Activated T-helper 1 cell treated with anti-CD3 and anti-CD28 coated beads, Interleukin-12 subunit alpha, Interleukin-12 subunit beta, Interleukin-2, Interleukin-4 antibody, amounts not matched to agents 30 ng/mL and 10 ng/mL and 1 ng/mL, durations not matched to agents 14 hours and 24 hours and 36 hours (primary cell): ENCODE measurements at regions of chr9 and their contacts with region 1.

Region 1: DNA sequence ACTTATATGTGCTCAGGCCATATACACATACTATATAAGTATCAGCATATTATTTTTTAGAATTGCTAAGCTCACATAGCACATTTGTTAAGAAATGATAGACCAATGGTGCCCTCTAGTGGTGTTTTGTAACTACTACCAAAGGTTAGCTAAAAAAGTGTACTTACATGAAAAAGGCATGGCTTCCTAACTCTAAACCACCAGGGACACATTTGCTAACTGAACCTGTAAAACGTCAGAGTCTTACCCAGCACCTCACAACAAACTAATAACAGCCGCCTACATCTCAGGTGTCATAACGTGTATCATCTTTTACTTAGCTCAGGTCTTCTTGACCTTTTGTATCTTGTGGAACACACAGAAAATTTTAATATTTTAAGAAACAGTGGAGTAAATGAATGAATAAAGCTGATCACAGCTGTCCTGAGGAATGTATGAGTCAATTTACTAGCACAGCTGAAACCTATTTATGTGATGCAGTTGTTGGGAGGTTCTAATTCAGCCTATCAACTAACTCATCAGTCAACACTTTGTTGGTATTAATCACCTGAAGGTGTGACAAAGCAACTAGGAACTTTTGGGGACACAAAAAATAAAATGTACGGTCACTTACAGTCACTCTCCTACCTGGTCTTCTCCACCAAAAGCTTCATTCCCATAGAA is 72.9 kb downstream of the BAAT start:
- DNase-seq: peak; percentile 2
- H3K4me3 Mint-ChIP-seq: no peak overlapping the region
- H3K27ac Mint-ChIP-seq: no peak overlapping the region
- H3K4me1 Mint-ChIP-seq: no peaks in the 10 kb centered on the region
- H3K27me3 Mint-ChIP-seq: peaks cover 3% of the 10 kb centered on the region

Region 2: DNA sequence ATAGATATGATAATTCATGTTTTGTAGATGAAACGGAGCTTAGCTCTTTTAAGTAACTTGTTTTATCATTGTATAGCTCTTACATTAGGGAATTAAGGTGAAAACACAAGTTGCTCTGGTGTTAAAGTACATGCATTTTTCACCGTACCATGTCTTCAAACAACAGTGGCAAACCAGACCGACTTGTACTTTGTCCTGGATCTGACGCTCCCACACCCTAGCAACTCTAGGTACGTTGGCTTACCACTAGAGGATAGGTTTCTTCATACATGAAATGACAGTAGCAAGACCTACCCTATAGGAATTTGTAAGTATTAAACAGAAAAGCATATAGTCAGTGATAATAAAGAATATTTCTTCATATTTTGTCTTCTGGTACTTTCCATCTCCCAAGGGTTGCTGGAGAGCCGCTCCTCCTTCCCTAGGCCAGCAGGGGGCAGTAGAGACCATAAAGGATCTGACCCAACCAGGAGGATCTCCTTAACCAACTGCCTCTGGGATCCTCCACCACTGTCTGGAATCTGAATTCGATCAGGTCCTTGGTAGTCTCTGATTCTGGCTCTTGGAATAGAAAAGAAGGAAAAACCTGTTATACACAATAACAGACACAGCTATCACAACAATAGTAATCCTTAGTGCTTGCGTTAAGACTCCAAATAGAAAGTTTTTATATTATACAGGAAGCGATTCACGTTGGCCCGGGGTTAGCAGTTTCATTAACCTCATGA is 597.4 kb before region 1 on chr9:
- intact Hi-C with region 1: loop called (anchors 1 kb)
- DNase-seq: peak; percentile 12
- H3K4me3 Mint-ChIP-seq: no peak overlapping the region
- H3K27ac Mint-ChIP-seq: no peak overlapping the region
- H3K4me1 Mint-ChIP-seq: no peaks in the 10 kb centered on the region
- H3K27me3 Mint-ChIP-seq: no peaks in the 10 kb centered on the region

Region 3: GRCh38 chr9:101119206-101119819 is 192.6 kb before region 1 on chr9:
- intact Hi-C with region 1: loop called (anchors 1 kb)
- DNase-seq: no peak
- H3K4me3 Mint-ChIP-seq: no peak overlapping the region
- H3K27ac Mint-ChIP-seq: no peak overlapping the region
- H3K4me1 Mint-ChIP-seq: no peaks in the 10 kb centered on the region
- H3K27me3 Mint-ChIP-seq: peaks cover 3% of the 10 kb centered on the region

Region 4: GRCh38 chr9:101254733-101255473 is 57.0 kb before region 1 on chr9:
- intact Hi-C with region 1: no loop called
- DNase-seq: no peak
- H3K4me3 Mint-ChIP-seq: no peak overlapping the region
- H3K27ac Mint-ChIP-seq: no peak overlapping the region
- H3K4me1 Mint-ChIP-seq: no peaks in the 10 kb centered on the region
- H3K27me3 Mint-ChIP-seq: peaks cover 2% of the 10 kb centered on the region

Region 5: DNA sequence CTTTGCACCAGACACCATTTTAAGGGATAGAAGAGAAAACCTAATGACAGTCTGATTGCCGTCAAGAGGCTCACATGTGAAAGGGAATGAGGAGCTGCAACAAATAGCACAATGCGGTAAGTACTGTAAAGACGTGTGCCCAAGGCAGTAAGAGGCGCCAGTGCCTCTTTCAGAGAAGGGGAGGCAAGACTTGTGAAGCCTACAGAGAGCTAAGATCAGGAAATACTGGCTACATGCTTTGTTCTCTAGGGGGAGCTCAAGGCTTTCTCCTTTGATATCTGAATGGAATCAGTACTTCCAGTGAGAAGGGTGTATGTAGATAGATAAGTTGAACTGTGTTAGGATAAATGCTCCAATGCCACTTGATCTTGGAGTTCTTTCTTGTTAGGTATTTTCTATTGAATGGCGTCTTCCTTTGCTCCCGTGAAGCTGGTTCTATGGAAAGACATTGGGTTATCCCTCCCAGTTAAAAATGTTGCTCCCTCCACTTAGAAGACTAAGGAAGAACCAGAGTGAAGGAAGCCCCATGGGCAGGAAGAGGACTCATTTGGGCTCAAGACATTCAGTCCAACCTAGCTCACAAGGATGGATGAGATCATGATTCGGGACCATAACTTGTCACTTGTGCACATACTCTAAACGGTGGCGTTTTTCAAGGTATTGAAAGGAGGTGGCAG is 147.2 kb after region 1 on chr9:
- intact Hi-C with region 1: no loop called
- DNase-seq: no peak
- H3K4me3 Mint-ChIP-seq: no peak overlapping the region
- H3K27ac Mint-ChIP-seq: no peak overlapping the region
- H3K4me1 Mint-ChIP-seq: no peaks in the 10 kb centered on the region
- H3K27me3 Mint-ChIP-seq: peaks cover 2% of the 10 kb centered on the region